GM12878 (cell line): ENCODE measurements at regions of chr15 and their contacts with region 1.

Region 1: GRCh38 chr15:75042730-75043508 is 19.5 kb downstream of the PPCDC start:
- DNase-seq: peak; percentile 100
- ATAC-seq: peak; percentile 79
- H3K4me3 ChIP-seq: peak overlapping the region; percentile 50; the same call in 1 of the 2 replicates
- H3K27ac ChIP-seq: peak overlapping the region; percentile 100
- H3K4me1 ChIP-seq: peaks cover 65% of the 10 kb centered on the region
- H3K27me3 ChIP-seq: no peaks in the 10 kb centered on the region
- CTCF ChIP-seq: peak; percentile 77 to 89 (median 89)
- EP300 ChIP-seq: peak; percentile 99
- POLR2A ChIP-seq: peak; percentile 90
- RAD21 ChIP-seq: peak; percentile 81

Region 2: DNA sequence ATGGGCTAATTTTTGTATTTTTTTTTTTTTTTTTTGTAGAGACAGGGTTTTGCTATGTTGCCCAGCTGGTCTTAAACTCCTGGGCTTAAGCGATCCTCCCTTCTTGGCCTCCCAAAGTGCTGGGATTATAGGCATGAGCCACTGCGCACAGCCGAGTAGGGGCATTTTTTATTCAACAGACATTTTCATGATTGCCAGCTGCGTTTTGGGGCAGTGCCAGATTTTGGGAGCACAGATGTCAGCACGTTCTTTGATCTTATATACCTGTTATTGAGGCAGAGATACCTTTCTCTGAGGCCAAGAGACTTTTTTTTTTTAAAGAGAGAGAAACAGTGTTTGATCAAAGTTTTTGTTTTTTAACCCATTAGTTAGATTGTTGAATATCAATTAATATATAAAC is 1973.8 kb before region 1 on chr15:
- CTCF ChIA-PET with region 1: no interaction called
- POLR2A ChIA-PET with region 1: no interaction called
- RAD21 ChIA-PET with region 1: no interaction called
- SMC1A ChIA-PET with region 1: no interaction called
- in situ Hi-C with region 1: no loop called
- intact Hi-C with region 1: no loop called
- DNase-seq: no peak
- ATAC-seq: no peak
- H3K4me3 ChIP-seq: no peak overlapping the region
- H3K27ac ChIP-seq: no peak overlapping the region
- H3K4me1 ChIP-seq: no peaks in the 10 kb centered on the region
- H3K27me3 ChIP-seq: no peaks in the 10 kb centered on the region
- CTCF ChIP-seq: no peak
- EP300 ChIP-seq: no peak
- POLR2A ChIP-seq: no peak
- RAD21 ChIP-seq: no peak

Region 3: DNA sequence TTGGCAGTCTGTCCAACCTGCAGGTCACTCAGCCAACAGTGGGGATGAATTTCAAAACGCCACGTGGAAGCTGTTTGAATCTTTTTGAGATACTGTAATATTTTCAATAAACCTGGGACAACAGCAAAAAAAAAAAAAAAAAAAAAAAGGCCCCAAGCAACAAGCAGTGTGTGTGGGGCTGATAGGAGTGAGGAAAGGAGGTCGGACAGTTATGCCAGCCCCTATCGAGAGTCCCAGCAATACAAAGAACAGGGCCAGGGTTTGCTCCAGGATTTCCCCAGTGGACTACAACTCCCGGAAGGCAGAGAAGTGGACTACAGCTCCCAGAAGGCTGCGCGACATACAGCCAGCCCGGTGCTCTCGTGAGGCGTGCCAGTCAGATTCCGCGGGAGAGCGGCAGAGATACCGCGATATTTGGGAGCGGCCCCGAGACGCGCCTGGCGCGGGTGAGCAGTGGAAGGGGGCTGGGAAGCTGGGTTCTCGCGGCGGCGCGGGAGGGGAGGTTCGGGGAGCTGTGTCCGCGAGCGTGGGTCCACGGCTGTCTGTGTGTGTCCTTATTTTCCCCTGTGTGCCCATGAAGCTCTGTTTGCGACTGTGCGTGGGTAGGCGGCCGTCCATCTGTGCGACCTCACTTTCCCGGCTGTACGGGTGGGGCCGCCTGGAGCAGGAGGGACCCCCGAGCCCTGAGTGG is 19.6 kb before region 1 on chr15 and contains the start of gene PPCDC:
- CTCF ChIA-PET with region 1: interaction called, 48 read pairs
- POLR2A ChIA-PET with region 1: interaction called, 3 read pairs
- RAD21 ChIA-PET with region 1: interaction called, 14 read pairs
- SMC1A ChIA-PET with region 1: no interaction called
- in situ Hi-C with region 1: no loop called
- intact Hi-C with region 1: no loop called
- DNase-seq: peak; percentile 84
- ATAC-seq: peak; percentile 99
- H3K4me3 ChIP-seq: peak within 1 kb of the TSS; percentile 86
- H3K27ac ChIP-seq: peak within 1 kb of the TSS; percentile 98
- H3K4me1 ChIP-seq: peaks cover 16% of the 10 kb centered on the region
- H3K27me3 ChIP-seq: no peaks in the 10 kb centered on the region
- CTCF ChIP-seq: no peak
- EP300 ChIP-seq: no peak
- POLR2A ChIP-seq: peak; percentile 99
- RAD21 ChIP-seq: no peak
- polyA plus RNA-seq, gene PPCDC: 92.0 to 135 TPM

Region 4: DNA sequence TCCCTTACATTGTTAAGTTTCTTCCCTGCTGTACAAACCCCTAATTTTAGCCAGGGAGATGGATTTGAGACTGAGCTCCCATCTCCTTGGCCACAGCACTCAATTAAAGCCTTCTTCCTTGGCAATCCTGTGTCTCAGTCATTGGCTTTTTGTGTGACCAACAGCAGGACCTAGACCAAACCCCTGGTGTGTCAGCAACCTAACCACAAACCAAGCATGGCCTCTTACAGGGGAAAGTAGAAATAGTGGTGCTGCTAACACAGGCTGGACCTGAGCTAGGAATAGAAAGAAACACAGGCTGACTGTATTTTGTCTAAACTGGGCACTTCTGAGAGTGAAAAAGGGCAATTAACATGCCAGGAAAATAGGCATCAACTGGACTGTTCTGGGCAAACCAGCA is 18.4 kb after region 1 on chr15:
- CTCF ChIA-PET with region 1: interaction called, 4 read pairs
- POLR2A ChIA-PET with region 1: interaction called, 6 read pairs
- RAD21 ChIA-PET with region 1: interaction called, 15 read pairs
- SMC1A ChIA-PET with region 1: interaction called, 4 read pairs
- in situ Hi-C with region 1: no loop called
- intact Hi-C with region 1: no loop called
- DNase-seq: peak; percentile 66
- ATAC-seq: peak; percentile 90
- H3K4me3 ChIP-seq: no peak overlapping the region
- H3K27ac ChIP-seq: peak overlapping the region; percentile 79
- H3K4me1 ChIP-seq: peaks cover 35% of the 10 kb centered on the region
- H3K27me3 ChIP-seq: no peaks in the 10 kb centered on the region
- CTCF ChIP-seq: no peak
- EP300 ChIP-seq: no peak
- POLR2A ChIP-seq: no peak
- RAD21 ChIP-seq: no peak

Region 5: DNA sequence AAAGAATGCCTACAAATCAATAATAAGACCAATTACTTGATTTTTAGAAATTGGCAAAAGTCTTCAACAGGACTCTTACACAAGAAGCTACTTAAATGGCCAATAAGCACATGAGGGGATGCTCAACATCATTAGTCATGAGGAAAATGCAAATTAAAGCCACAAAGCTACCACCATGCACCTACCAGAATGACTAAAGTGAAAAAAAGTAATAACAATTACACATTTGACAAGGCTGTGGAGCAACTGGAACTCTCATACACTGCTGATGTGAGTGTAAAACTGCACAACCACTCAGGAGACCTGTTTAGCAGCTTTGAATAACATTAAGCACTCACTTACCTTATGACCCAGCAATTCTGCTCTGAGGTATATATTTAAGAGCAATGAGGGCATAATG is 48.9 kb after region 1 on chr15:
- CTCF ChIA-PET with region 1: interaction called, 10 read pairs
- POLR2A ChIA-PET with region 1: interaction called, 20 read pairs
- RAD21 ChIA-PET with region 1: interaction called, 30 read pairs
- SMC1A ChIA-PET with region 1: interaction called, 3 read pairs
- in situ Hi-C with region 1: no loop called
- intact Hi-C with region 1: loop called (anchors 1 kb)
- DNase-seq: peak; percentile 82
- ATAC-seq: peak; percentile 64
- H3K4me3 ChIP-seq: no peak overlapping the region
- H3K27ac ChIP-seq: 0 out of 2 replicates have a peak overlapping the region, but pooled peaks have one; percentile 17
- H3K4me1 ChIP-seq: peaks cover 12% of the 10 kb centered on the region
- H3K27me3 ChIP-seq: no peaks in the 10 kb centered on the region
- CTCF ChIP-seq: no peak
- EP300 ChIP-seq: peak; percentile 55 to 67; a peak in 2 of 4 replicates
- POLR2A ChIP-seq: no peak
- RAD21 ChIP-seq: no peak

Region 6: GRCh38 chr15:75112848-75113492 is 70.1 kb after region 1 on chr15:
- CTCF ChIA-PET with region 1: interaction called, 17 read pairs
- POLR2A ChIA-PET with region 1: interaction called, 3 read pairs
- RAD21 ChIA-PET with region 1: interaction called, 7 read pairs
- SMC1A ChIA-PET with region 1: interaction called, 10 read pairs
- in situ Hi-C with region 1: no loop called
- intact Hi-C with region 1: loop called (anchors 1 kb)
- DNase-seq: peak; percentile 91
- ATAC-seq: peak; percentile 78
- H3K4me3 ChIP-seq: no peak overlapping the region
- H3K27ac ChIP-seq: peak overlapping the region; percentile 99
- H3K4me1 ChIP-seq: peaks cover 62% of the 10 kb centered on the region
- H3K27me3 ChIP-seq: no peaks in the 10 kb centered on the region
- CTCF ChIP-seq: no peak
- EP300 ChIP-seq: peak; percentile 94 to 98; a peak in 3 of 4 replicates
- POLR2A ChIP-seq: no peak
- RAD21 ChIP-seq: no peak; the same call in 1 of the 2 replicates

Region 7: DNA sequence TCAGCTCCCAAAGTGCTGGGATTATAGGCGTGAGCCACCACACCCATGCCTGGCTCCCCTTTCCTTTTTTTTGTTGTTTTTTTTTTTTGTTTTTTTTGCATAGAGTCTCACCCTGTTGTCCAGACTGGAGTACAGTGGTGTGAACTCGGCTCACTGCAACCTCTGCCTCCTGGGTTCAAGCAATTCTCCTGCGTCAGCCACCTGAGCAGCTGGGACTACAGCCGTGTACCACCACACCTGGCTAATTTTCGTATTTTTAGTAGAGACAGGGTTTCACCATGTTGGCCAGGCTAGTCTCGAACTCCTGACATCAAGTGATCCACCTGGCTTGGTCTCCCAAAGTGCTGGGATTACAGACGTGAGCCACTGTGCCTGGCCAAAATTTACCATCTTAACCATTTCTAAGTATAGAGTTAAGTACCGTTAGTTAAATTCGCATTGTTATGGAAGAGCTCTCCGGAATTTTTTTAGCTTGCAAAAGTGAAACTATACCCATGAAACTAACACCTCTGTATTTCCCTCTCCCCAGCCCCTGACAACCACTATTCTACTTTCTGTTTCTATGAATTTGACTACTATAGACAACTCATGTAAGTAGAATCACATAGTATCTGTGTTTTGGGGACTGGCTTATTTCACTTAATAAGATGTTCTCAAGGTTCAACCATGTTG is 87.8 kb after region 1 on chr15:
- CTCF ChIA-PET with region 1: interaction called, 36 read pairs
- POLR2A ChIA-PET with region 1: interaction called, 33 read pairs
- RAD21 ChIA-PET with region 1: interaction called, 32 read pairs
- SMC1A ChIA-PET with region 1: no interaction called
- in situ Hi-C with region 1: no loop called
- intact Hi-C with region 1: loop called (anchors 1 kb)
- DNase-seq: peak; percentile 89
- ATAC-seq: peak; percentile 92
- H3K4me3 ChIP-seq: peak overlapping the region; percentile 13; the same call in 1 of the 2 replicates
- H3K27ac ChIP-seq: peak overlapping the region; percentile 99
- H3K4me1 ChIP-seq: peaks cover 67% of the 10 kb centered on the region
- H3K27me3 ChIP-seq: no peaks in the 10 kb centered on the region
- CTCF ChIP-seq: no peak
- EP300 ChIP-seq: peak; percentile 55 to 82; a peak in 3 of 4 replicates
- POLR2A ChIP-seq: no peak
- RAD21 ChIP-seq: 0 out of 2 replicates have a peak, but pooled peaks have one; percentile 9